CD4-positive, alpha-beta memory T cell (primary cell): ENCODE measurements at regions of chr7 and their contacts with region 1.

Region 1: GRCh38 chr7:148719753-148720152 is 21.1 kb downstream of the CUL1 start:
- DNase-seq: no peak
- H3K4me3 ChIP-seq: no peak overlapping the region
- H3K4me3 Mint-ChIP-seq: peak overlapping the region in 3 of 8 donors; percentile 48 to 65 (median 63)
- H3K27ac ChIP-seq: no peak overlapping the region
- H3K27ac Mint-ChIP-seq: no peak overlapping the region
- H3K4me1 ChIP-seq: peaks cover 84% of the 10 kb centered on the region
- H3K4me1 Mint-ChIP-seq: peaks cover 57 to 94% (median 81%) of the 10 kb centered on the region in 4 donors
- H3K27me3 ChIP-seq: no peaks in the 10 kb centered on the region
- H3K27me3 Mint-ChIP-seq: no peaks in the 10 kb centered on the region

Region 2: DNA sequence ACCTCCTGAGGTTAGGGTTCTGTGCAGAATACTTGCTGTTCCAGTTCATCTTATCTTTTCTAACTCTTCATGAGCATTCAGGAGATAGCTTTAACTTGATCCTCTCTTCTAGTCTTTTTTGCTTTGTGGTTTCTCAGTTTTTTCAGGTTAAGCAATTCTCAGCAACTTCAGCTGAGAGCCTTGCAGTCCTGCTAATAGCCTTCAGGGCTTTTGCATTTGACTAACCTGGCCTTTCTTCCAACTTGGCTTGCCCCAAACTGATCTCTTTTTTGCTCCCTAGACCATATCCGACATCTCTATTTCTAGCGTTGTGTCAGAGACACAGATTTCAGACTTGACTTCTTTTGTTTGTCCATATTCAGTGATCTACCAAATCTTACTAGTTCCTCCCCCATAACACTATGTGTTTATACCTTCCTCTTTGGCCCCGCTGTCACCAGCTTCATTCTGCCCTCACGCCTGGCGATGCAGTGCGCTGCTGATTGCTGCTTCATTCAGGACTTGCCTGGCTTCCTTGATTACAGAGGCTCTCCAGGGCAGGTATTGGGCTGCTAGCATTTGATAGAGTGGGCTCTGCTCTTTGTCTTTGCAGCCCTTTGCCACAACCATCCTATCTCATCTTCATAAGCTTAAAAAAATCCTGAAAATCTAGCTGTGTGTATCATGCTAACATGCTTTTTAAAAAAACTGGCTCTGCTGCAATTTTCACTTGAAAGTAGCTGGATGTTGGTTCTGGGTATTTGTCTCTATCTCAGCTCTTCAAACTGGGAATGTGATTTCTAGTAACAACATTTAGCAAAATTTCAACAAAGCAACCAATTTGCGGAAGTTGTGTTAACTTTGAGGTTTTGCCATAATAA is 11.5 kb before region 1 on chr7:
- CTCF ChIA-PET with region 1: interaction called, 3 read pairs
- POLR2A ChIA-PET with region 1: interaction called, 5 read pairs
- intact Hi-C with region 1: loop called (anchors 2 kb)
- DNase-seq: no peak
- H3K4me3 ChIP-seq: no peak overlapping the region
- H3K4me3 Mint-ChIP-seq: peak overlapping the region in 7 of 8 donors; percentile 2 to 74 (median 31)
- H3K27ac ChIP-seq: no peak overlapping the region
- H3K27ac Mint-ChIP-seq: peak overlapping the region in 4 of 7 donors; percentile 1 to 52 (median 16)
- H3K4me1 ChIP-seq: peaks cover 79% of the 10 kb centered on the region
- H3K4me1 Mint-ChIP-seq: peaks cover 58 to 95% (median 75%) of the 10 kb centered on the region in 4 donors
- H3K27me3 ChIP-seq: no peaks in the 10 kb centered on the region
- H3K27me3 Mint-ChIP-seq: no peaks in the 10 kb centered on the region